Activated CD4-positive, alpha-beta T cell treated with anti-CD3 and anti-CD28 coated beads, Interleukin-2, amount 10 ng/mL, durations not matched to agents 24 days and 14 days (primary cell): ENCODE measurements at regions of chr7 and their contacts with region 1.

Region 1: DNA sequence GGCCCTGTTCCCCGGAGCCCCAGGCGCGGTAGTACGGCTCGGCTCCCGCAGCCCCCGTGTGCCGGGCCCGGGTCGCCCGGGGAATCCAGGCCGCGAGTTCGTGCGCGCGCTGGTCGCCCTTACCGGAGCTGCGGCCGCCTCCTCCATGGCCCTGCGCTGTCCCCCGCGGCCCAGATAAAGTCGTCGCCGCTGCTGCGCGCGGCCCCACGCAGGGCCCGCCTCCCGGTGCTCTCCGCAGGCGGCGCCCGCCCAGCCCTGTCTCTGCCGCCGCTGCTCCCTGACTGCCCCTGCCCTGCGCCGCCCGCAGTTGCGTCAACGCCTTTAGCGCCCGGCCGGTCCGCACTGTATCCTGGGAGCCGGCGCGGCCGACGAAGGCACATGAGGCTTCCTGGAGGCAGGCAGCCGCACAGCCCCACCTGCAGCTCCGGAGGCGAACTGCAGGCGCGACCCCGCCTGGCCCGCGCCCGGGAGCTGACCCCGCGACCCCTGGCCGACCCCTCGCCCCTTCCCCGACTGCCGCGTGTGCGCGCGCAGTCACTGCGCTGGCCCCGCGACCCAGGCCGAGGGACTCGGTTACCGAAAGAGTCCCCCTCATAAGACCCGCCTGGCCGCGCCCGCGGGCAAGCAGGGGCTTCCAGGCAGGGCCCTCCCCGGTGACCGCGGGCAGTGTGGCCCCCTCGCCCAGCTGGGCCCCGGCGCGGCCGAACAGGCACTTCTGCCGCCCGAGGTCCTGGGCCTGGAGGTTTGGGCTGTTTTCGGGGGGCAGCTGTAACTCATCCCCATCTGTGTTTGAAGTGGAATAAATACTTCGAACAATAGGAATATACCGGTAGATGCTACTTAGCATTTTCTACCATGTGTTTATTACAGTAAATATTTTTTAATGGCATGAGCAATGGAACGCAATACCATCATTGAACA is 127.1 kb upstream of the ZNF746 start:
- DNase-seq: peak; percentile 98
- H3K4me3 Mint-ChIP-seq: peak overlapping the region; percentile 91
- H3K27ac Mint-ChIP-seq: peak overlapping the region; percentile 91
- H3K4me1 Mint-ChIP-seq: peaks cover 33% of the 10 kb centered on the region
- H3K27me3 Mint-ChIP-seq: peaks cover 14% of the 10 kb centered on the region

Region 2: DNA sequence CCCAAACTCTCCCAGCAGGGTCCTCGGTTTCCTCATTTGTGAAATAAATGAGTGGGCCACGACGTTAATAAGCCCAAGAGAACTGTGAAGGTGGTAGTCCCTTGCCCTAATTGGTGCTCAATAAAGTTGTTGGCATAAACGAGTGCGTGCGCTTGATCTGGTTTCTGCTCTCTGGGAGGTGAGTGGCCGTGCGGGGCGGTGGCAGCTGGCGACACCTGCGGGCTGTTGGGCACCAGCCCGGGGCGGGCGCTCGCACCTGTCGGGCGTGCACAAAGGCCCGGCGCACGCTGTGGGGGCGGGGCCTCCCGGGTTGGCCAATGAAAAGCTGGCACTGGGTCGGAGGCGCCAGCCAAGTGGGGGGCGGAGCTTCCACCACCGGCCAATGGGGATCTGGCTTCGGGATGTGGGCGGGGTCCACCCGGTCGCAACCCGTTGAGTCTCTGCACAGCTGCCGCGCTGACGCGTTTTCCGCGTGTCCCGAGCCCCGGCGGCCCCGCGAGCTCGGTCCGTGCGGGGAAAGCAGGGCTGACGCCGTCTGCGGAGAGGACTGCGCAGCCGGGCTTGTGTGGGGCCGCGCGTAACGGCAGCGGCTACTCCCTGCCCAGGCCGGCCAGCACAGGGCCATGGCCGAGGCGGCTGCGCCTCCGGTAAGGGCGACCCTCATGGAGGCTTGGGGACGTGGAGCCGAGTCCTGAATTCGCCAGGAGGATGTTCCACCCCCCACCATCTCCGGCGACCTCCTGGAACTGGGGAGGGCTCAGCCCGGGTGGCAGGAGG is 339.6 kb before region 1 on chr7:
- intact Hi-C with region 1: loop called (anchors 10 kb)
- DNase-seq: peak; percentile 100
- H3K4me3 Mint-ChIP-seq: peak overlapping the region; percentile 83
- H3K27ac Mint-ChIP-seq: peak overlapping the region; percentile 58
- H3K4me1 Mint-ChIP-seq: peaks cover 32% of the 10 kb centered on the region
- H3K27me3 Mint-ChIP-seq: no peaks in the 10 kb centered on the region

Region 3: DNA sequence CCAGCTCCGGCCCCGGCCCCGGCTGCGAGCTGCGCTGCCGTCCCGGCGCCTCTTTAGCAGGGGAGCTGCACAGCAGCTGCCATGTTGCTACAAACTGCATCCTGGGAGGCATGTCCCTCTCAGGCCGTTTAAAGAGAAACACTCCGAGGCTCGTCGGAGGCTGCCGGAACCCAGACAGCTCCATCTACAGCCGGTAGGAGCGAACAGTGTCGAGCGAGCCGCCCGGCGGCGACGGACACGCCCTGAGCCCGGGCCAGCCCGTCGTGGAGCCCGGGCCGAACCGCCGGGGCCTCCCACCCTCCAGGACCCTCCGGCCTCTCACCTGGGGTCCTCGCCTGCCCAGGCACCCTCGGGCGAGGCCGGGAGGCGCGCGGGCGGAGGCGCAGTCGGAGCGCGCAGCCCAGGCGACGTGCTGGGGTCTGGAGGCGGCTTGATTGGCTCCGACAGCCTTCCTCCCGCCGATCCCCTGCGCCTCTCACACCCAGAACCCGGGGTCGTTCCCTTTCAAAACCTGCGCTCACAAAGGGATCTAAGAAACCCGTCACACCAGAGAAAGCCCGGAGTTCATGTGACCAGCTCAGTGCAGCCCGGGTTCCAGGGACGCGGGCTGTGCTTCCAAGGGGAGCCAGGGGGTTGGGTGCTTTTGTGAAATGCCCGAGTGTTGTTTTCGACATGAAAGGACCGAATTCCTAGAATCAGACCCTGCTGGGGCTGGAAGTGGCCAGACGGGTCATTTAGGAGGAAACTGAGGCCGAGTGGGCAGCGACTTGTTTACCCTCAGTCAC is 164.0 kb before region 1 on chr7 and contains the start of gene ZNF777:
- intact Hi-C with region 1: loop called (anchors 2 kb)
- DNase-seq: peak; percentile 95
- H3K4me3 Mint-ChIP-seq: peak within 1 kb of the TSS; percentile 87
- H3K27ac Mint-ChIP-seq: peak within 1 kb of the TSS; percentile 79
- H3K4me1 Mint-ChIP-seq: peaks cover 21% of the 10 kb centered on the region
- H3K27me3 Mint-ChIP-seq: peaks cover 25% of the 10 kb centered on the region
- total RNA-seq, gene ZNF777: 18.2 and 19.2 TPM in 2 replicates

Region 4: DNA sequence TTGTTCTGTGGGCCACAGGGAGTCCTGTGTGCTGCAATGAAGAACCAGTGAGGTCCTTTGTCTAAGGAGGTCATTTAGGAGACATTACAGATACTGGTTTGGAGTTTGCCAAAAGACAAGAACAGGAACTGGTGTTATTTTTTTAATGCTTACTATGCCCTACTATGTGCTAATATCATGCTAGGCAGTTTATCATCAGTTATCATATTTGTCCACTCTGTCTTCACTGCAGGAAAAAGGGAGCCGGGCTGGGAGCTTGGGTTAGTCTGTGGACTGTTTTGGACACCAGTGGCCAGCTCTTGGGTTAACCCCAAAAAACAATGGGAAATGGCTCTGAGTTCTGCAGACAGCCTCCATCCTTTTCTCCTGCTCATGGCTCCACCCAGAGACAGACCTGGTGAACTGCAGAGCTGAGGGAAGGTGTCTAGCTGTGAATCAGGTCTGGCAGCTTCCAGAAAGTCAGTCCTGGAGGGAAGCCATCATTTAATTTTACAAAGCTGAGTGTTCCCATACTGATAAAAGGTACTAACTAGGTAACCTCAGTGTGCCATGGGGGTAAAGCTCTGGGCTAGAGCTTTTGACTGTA is 25.9 kb before region 1 on chr7:
- intact Hi-C with region 1: loop called (anchors 1 kb)
- DNase-seq: peak; percentile 80
- H3K4me3 Mint-ChIP-seq: no peak overlapping the region
- H3K27ac Mint-ChIP-seq: peak overlapping the region; percentile 87
- H3K4me1 Mint-ChIP-seq: peaks cover 30% of the 10 kb centered on the region
- H3K27me3 Mint-ChIP-seq: peaks cover 2% of the 10 kb centered on the region

Region 5: DNA sequence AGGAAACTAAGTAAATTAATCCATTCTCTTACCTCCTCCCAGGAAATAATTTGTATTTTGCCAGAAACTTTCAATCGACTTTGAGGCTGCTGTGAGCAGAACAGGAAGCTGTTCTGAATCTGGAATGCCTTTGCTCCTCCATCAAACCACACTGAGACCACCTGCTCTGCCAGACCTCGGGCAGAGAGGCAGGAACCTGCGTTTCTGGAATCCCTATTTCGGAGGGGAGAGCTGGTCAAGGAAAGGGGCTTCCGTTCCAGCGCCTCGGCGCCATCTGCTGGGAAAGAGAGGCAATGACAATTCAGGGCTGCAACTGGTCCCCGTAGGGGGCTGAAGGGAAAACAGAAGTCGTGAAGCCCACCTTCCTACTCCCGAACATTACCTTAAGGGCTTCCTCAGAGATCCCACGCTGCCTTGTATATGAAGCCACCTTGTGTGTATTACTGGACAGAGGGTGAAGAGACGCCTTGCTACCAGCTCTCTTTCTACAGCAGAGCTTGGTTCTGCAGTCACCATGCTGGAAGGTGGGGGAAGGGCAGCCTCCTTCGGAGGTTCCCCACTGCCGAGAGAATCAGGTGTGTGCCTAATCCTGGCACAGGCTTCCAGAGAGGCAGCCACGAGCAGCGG is 117.5 kb after region 1 on chr7:
- intact Hi-C with region 1: no loop called
- DNase-seq: peak; percentile 89
- H3K4me3 Mint-ChIP-seq: peak overlapping the region; percentile 81
- H3K27ac Mint-ChIP-seq: no peak overlapping the region
- H3K4me1 Mint-ChIP-seq: peaks cover 10% of the 10 kb centered on the region
- H3K27me3 Mint-ChIP-seq: peaks cover 45% of the 10 kb centered on the region

Region 6: DNA sequence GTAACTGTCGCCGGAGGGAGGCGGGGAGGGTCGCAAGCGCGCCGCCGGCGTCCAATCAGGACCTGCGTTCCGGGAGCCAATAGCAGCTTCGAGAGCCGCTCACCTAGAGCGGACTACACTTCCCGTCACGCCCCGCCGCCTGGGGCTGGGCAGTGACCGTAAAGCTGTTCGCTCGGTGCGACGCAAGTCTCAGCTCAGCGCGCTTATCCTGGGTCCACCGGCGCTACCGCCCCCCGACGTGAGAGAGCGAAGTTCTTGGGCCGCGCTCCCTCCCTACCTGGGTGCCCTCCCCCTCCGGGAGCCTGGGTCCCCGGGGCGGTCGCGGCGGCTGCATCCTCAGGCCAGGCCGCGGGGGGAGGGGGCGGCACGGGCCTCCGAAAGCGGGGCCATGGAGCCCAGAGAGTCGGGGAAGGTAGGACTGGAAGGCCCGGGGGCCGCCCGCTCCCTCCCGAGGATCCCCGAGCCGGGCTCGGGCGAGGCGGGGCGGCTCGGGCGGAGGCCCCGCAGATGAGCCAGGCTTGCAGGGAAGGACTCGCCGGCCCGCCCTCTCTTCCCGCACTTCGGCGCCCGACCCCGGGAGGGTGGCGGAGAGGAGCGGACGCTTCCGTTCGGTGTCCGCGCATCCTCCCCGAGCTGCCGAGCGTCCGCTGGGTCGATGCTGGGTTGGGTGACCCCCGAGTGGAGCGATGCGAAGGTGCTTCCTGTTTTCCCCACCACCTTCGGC is 213.7 kb after region 1 on chr7 and contains the start of gene ZNF862:
- intact Hi-C with region 1: loop called (anchors 2 kb)
- DNase-seq: peak; percentile 98
- H3K4me3 Mint-ChIP-seq: peak within 1 kb of the TSS; percentile 88
- H3K27ac Mint-ChIP-seq: peak within 1 kb of the TSS; percentile 83
- H3K4me1 Mint-ChIP-seq: peaks cover 18% of the 10 kb centered on the region
- H3K27me3 Mint-ChIP-seq: peaks cover 20% of the 10 kb centered on the region
- total RNA-seq, gene ZNF862: 16.6 and 18.3 TPM in 2 replicates

Region 7: GRCh38 chr7:151080522-151081169 is 1456.0 kb after region 1 on chr7 and contains the start of gene FASTK:
- intact Hi-C with region 1: loop called (anchors 10 kb)
- DNase-seq: peak; percentile 97
- H3K4me3 Mint-ChIP-seq: peak within 1 kb of the TSS; percentile 95
- H3K27ac Mint-ChIP-seq: peak within 1 kb of the TSS; percentile 82
- H3K4me1 Mint-ChIP-seq: peaks cover 30% of the 10 kb centered on the region
- H3K27me3 Mint-ChIP-seq: peaks cover 9% of the 10 kb centered on the region
- total RNA-seq, gene FASTK: 90.8 and 92.3 TPM in 2 replicates